Right lobe of liver (tissue), 6 donors: ENCODE measurements at regions of chr16 and their contacts with region 1.

Region 1: DNA sequence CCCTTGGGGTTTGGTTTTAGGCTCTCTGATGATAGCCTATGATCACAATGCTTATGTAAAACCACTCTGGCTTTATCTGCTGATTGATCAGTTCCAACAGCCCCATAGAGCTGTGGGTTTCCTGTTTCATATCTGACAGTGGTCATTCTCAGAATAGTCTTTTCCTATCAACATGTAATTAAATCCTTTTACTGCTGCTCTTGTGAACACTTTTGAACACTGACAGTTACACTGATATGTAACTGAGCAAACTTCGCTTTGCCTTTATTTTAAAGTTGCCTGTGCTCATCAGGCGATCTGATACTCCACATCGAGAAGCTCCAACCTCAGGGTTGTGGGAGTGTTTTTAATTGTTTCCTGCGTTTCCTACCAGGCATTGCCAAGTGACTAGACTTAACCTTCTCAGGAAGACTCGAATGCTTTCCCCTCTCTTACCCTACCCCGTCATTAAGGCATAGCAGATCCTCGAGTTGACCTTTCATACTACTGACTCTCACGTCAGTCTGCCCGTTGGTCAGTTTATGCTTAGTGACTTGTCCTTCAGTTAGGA is 17.3 kb upstream of the CLEC18B start:
- DNase-seq: no peak
- ATAC-seq: peak in 1 of 4 donors; percentile 41
- H3K4me3 ChIP-seq: no peak overlapping the region
- H3K27ac ChIP-seq: no peak overlapping the region
- H3K4me1 ChIP-seq: no peaks in the 10 kb centered on the region
- H3K27me3 ChIP-seq: no peaks in the 10 kb centered on the region
- CTCF ChIP-seq: no peak
- POLR2A ChIP-seq: no peak

Region 2: DNA sequence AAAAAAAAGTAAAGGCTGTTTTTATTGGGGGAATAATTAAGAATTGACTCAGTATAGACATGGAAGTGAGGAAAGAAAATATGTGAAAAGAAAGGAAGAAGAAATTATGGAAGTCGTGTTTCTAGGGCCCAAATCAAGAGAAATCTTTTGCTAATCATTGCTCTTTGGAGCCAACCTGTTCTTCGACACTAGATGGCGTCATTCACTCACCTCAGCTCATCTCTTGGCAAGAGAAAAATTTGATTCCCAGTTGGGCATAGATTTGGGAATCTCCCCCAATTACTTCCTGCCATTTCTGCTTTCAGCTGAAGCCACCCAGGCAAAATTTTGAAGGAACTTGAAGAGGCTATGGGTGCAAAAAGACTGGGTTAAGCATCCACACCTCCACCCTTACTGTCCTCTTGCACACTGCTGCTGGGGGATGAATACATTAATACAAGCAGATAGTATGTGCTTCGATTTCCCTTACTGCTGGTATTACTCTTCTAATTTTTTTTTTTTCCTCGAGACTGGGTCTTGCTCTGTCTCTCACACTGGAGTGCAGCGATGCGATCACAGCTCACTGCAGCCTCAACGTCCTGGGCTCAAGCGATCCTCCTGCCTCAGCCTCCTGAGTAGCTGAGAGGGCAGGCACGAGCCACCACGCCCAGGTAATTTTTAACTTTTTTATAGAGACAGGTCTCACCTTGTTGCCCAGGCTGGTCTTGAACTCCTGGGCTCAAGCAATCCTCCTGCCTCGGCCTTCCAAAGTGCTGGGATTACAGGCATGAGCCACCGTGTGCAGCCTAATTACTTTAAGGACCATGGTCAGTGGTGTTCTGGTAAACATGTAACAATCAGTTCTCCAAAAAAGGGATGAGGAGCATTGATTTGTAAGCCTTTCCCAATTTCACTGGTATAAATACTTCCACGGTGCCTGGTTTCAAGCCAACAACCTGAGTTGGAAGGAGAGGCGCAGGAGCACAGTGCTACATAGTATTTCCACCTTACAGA is 128.5 kb before region 1 on chr16:
- intact Hi-C with region 1: loop called in 1 of 2 experiments (anchors 10 kb)
- DNase-seq: no peak
- ATAC-seq: peak; percentile 77 to 85 (median 82)
- H3K4me3 ChIP-seq: no peak overlapping the region
- H3K27ac ChIP-seq: no peak overlapping the region
- H3K4me1 ChIP-seq: no peaks in the 10 kb centered on the region
- H3K27me3 ChIP-seq: no peaks in the 10 kb centered on the region
- CTCF ChIP-seq: peak; percentile 65 to 79 (median 74)
- POLR2A ChIP-seq: no peak

Region 3: GRCh38 chr16:74657870-74658642 is 219.5 kb after region 1 on chr16:
- intact Hi-C with region 1: no loop called
- DNase-seq: no peak
- ATAC-seq: peak in 1 of 4 donors; percentile 65
- H3K4me3 ChIP-seq: no peak overlapping the region
- H3K27ac ChIP-seq: no peak overlapping the region
- H3K4me1 ChIP-seq: peaks cover 0 to 13% (median 0%) of the 10 kb centered on the region in 4 donors
- H3K27me3 ChIP-seq: no peaks in the 10 kb centered on the region
- CTCF ChIP-seq: no peak
- POLR2A ChIP-seq: no peak